Activated CD4-positive, alpha-beta memory T cell treated with anti-CD3 and anti-CD28 coated beads for 36 hours (primary cell): ENCODE measurements at regions of chr21 and their contacts with region 1.

Region 1: DNA sequence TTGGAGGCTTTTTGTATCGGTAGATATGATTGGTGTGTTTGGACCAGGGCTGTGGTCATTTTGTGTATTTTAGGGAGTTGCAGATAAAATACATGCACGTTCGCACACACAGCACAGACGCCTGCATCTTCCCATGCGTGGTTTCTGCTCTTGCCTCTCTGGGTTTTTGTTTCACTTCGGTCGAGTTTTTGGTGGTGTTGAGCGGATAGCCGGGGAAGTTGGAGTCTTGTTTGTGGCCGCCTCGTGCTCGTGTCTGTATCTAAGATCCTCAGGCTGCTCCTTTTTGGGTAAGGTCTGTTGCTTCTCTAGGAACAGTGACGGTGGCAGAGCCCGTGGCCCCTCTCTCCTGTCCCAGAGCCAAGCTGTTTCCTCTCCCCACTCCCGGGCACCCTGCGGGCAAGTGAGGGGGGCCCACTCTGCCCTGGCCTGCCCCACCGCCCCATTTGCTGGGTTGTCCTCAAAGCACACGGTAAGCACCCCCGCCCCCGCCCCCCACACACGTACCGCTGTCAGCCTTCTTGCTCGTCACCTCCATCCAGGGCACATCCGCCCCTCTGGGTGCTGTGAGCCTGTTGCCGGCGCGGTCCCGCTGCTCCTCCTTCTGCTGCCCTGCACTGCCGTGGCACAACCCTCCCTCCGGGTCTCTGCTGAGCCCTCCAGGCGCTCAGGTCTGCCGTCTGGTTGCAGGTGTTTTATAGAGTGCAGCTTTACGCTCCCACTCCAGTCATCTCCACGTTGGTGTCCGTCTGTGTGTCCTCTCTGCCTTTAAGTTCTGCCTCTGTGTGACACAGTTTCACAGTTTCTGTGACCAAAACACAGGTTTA is 51.9 kb downstream of the AGPAT3 start:
- DNase-seq: peak; percentile 76
- H3K4me3 Mint-ChIP-seq: peak overlapping the region; percentile 68
- H3K27ac Mint-ChIP-seq: peak overlapping the region; percentile 76
- H3K4me1 Mint-ChIP-seq: peaks cover 52% of the 10 kb centered on the region
- H3K27me3 Mint-ChIP-seq: no peaks in the 10 kb centered on the region

Region 2: DNA sequence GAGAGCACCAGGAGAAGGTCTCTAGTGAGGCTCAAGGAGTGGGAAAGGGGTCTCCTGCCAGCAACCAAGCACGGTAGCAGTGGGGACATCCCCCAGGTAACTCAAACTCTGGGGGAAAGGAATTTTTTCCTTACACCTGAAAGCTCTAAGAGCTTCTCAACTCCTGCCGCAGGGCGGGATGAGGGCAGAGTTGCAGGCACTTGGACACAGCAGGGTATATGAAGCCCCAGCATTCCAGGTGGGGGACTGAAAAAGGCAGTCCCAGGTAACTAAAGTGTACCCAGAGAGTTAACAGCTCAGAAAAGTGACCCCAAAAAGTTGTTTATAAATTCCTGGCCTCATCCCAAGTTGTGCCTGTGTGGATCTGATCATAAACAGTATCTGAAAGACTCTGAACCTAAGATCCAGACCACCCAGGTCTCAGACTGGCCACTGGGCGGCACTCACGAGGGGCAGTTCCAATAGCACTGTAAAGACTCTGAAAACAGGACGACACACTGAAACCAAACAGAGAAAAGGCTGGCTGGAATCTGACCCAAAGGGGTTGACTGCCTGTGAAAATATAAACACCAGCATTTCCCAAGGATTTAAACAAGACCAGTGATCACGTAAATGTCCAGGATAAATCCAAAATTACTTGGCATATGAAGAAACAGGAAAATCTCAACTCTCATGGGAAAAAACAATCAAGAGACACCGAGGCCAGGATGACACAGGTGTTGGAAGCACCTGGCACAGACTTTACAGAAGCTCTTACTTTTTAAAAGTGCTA is 305.1 kb before region 1 on chr21:
- CTCF ChIA-PET with region 1: no interaction called
- POLR2A ChIA-PET with region 1: no interaction called
- intact Hi-C with region 1: no loop called
- DNase-seq: peak; percentile 25
- H3K4me3 Mint-ChIP-seq: no peak overlapping the region
- H3K27ac Mint-ChIP-seq: no peak overlapping the region
- H3K4me1 Mint-ChIP-seq: peaks cover 6% of the 10 kb centered on the region
- H3K27me3 Mint-ChIP-seq: peaks cover 3% of the 10 kb centered on the region

Region 3: GRCh38 chr21:43810505-43811261 is 106.2 kb before region 1 on chr21:
- CTCF ChIA-PET with region 1: interaction called, 10 read pairs
- POLR2A ChIA-PET with region 1: interaction called, 4 read pairs
- intact Hi-C with region 1: no loop called
- DNase-seq: peak; percentile 93
- H3K4me3 Mint-ChIP-seq: no peak overlapping the region
- H3K27ac Mint-ChIP-seq: no peak overlapping the region
- H3K4me1 Mint-ChIP-seq: peaks cover 7% of the 10 kb centered on the region
- H3K27me3 Mint-ChIP-seq: no peaks in the 10 kb centered on the region

Region 4: GRCh38 chr21:43893536-43894205 is 23.2 kb before region 1 on chr21:
- CTCF ChIA-PET with region 1: interaction called, 3 read pairs
- POLR2A ChIA-PET with region 1: interaction called, 9 read pairs
- intact Hi-C with region 1: loop called (anchors 1 kb)
- DNase-seq: peak; percentile 73
- H3K4me3 Mint-ChIP-seq: peak overlapping the region; percentile 42
- H3K27ac Mint-ChIP-seq: peak overlapping the region; percentile 71
- H3K4me1 Mint-ChIP-seq: peaks cover 50% of the 10 kb centered on the region
- H3K27me3 Mint-ChIP-seq: no peaks in the 10 kb centered on the region